Activated CD8-positive, alpha-beta T cell treated with anti-CD3 and anti-CD28 coated beads, Interleukin-2, amount 10 ng/mL, durations not matched to agents 7 days and 5 days (primary cell): ENCODE measurements at regions of chr19 and their contacts with region 1.

Region 1: DNA sequence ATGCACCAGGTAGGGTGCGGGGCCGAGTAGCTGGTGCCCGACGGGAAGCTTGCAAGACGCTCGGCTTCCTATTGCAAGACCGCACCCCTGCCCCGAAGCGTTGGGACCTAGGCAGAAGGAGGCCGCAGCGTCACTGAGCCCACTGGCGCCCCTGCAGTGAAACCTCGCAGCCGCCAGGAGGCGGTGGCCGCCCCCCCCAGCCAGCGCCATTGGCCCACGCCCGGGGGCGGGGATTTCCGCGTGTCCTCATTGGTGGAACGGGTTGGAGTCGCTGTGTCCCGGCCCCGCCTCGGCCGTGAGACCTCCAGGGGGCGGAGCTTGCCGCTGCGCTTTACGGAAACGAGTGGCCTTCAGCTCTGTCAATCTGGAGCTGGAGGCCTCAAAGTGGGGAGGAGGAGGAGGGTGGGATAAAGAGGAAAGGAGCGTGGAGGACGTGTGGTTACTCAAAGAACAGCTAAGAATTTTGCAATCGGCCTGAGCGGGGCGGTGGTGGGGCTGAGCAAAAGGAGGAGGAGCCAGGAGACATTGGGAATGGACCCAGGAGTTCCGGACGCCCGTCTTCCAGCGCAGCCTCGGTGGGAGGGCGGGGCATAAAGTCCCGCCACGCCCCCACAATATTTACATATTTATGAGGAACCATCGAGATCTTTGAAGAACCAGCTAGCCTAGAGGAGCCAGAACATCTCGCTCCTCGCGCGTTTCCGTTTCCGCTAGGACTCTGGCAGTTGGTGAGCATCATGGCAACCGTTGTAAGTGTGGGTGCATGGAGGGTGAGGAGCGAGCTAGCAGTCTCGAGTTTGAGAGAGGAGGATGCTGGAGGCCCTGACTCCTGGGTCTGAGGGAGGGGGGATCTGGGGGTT is at the starts of genes GYS1 and RUVBL2:
- DNase-seq: peak; percentile 99
- ATAC-seq: peak; percentile 95
- H3K4me3 Mint-ChIP-seq: peak within 1 kb of the TSS; percentile 92
- H3K27ac Mint-ChIP-seq: peak within 1 kb of the TSS; percentile 96
- H3K4me1 Mint-ChIP-seq: peaks cover 51% of the 10 kb centered on the region
- H3K27me3 Mint-ChIP-seq: no peaks in the 10 kb centered on the region
- total RNA-seq, gene GYS1: 54.7 to 57.9 TPM
- total RNA-seq, gene RUVBL2: 105 to 106 TPM

Region 2: GRCh38 chr19:48819366-48819816 is 174.0 kb before region 1 on chr19:
- CTCF ChIA-PET with region 1: no interaction called
- POLR2A ChIA-PET with region 1: no interaction called
- DNase-seq: no peak
- ATAC-seq: no peak
- H3K4me3 Mint-ChIP-seq: no peak overlapping the region
- H3K27ac Mint-ChIP-seq: no peak overlapping the region
- H3K4me1 Mint-ChIP-seq: peaks cover 2% of the 10 kb centered on the region
- H3K27me3 Mint-ChIP-seq: no peaks in the 10 kb centered on the region

Region 3: DNA sequence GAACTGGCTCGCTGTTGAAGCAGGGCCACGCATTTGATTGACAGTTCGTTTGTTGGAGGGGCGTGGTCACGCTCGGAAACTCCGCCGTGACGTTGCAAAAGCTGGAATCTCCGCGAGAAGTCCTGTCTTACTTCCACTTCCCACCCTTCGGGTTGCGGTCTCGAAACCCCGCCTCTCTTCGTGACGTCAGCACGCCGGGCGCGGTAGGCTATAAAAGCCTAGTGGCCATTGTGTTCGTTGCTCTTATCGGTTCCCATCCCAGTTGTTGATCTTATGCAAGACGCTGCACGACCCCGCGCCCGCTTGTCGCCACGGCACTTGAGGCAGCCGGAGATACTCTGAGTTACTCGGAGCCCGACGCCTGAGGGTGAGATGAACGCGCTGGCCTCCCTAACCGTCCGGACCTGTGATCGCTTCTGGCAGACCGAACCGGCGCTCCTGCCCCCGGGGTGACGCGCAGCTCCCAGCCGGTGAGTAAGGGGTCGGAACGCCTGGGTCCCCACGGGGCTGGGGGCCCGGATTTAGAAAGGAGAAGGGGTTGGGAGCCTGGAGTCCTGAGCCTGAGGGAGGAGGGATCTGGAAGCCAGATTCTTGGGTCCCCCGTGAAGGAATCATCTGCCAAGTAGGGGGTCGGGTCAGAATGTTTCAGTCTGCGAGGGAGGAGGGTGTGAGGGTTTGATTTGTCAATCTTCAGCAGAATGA is 121.1 kb before region 1 on chr19 and contains the start of gene PPP1R15A:
- CTCF ChIA-PET with region 1: interaction called, 5 read pairs
- POLR2A ChIA-PET with region 1: interaction called, 15 read pairs
- DNase-seq: peak; percentile 99
- ATAC-seq: peak; percentile 47
- H3K4me3 Mint-ChIP-seq: peak within 1 kb of the TSS; percentile 99
- H3K27ac Mint-ChIP-seq: peak within 1 kb of the TSS; percentile 98
- H3K4me1 Mint-ChIP-seq: peaks cover 42% of the 10 kb centered on the region
- H3K27me3 Mint-ChIP-seq: no peaks in the 10 kb centered on the region
- total RNA-seq, gene PPP1R15A: 104 to 124 TPM

Region 4: DNA sequence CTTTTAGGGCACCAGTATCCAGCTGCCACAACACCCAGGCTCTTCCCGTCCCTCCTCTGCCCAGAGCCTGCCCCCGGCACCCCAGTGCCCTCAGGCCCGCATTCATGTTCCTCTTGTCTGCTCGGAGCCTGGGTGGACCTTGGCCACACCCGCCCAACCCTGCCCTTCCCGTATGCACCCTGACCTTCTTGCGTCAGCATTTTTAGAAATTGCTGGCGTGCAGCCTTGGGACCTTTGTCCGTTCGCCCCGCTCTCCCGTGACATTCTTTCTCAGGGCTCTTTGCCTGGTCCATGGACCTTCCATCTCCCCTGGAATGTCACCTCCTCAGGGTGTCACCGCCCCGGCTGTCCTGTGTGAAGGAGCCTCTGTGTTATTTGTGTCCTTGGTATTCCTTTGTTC is 85.7 kb before region 1 on chr19:
- CTCF ChIA-PET with region 1: no interaction called
- POLR2A ChIA-PET with region 1: no interaction called
- DNase-seq: no peak
- ATAC-seq: no peak
- H3K4me3 Mint-ChIP-seq: no peak overlapping the region
- H3K27ac Mint-ChIP-seq: peak overlapping the region; percentile 49
- H3K4me1 Mint-ChIP-seq: peaks cover 7% of the 10 kb centered on the region
- H3K27me3 Mint-ChIP-seq: no peaks in the 10 kb centered on the region

Region 5: DNA sequence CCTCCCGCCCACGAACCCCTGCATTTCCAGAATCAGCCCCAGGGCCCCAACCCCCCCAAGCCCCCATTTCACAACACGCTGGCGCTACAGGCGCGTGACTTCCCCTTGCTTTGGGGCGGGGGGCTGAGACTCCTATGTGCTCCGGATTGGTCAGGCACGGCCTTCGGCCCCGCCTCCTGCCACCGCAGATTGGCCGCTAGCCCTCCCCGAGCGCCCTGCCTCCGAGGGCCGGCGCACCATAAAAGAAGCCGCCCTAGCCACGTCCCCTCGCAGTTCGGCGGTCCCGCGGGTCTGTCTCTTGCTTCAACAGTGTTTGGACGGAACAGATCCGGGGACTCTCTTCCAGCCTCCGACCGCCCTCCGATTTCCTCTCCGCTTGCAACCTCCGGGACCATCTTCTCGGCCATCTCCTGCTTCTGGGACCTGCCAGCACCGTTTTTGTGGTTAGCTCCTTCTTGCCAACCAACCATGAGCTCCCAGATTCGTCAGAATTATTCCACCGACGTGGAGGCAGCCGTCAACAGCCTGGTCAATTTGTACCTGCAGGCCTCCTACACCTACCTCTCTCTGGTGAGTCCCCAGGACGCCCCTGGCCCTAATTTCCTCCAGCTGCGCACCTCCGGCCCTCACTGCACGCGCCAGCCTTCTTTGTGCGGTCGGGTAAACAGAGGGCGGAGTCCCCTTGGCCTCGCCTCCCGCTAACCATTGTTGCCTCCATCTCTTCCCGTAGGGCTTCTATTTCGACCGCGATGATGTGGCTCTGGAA is 28.2 kb before region 1 on chr19 and contains the start of gene FTL:
- CTCF ChIA-PET with region 1: interaction called, 32 read pairs
- POLR2A ChIA-PET with region 1: interaction called, 4 read pairs
- DNase-seq: peak; percentile 94
- ATAC-seq: peak; percentile 72
- H3K4me3 Mint-ChIP-seq: peak within 1 kb of the TSS; percentile 96
- H3K27ac Mint-ChIP-seq: peak within 1 kb of the TSS; percentile 96
- H3K4me1 Mint-ChIP-seq: peaks cover 73% of the 10 kb centered on the region
- H3K27me3 Mint-ChIP-seq: no peaks in the 10 kb centered on the region
- total RNA-seq, gene FTL: 971 to 1,027 TPM

Region 6: DNA sequence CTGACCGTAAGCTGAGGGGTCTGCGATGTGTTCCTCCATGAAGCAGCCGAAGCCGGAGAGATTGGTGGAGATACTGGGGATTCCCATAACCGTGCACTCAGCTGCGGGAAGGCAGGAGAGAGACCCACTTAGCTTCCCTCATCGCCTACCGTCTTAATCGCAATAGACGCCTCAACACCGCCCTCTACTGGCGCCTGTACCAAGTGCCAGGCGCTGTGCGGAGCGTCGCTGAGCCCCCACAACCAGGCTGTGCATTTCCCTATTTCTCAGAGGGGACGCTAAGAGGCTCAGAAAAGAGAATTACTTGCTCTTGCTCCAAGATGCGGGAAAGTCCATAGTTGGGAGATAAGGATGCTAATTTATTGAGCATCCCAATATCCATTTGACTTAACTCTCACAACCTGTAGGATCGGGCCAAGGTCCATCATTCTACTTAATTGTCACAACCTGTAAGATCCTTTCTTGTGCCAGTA is 22.4 kb before region 1 on chr19:
- CTCF ChIA-PET with region 1: interaction called, 96 read pairs
- POLR2A ChIA-PET with region 1: interaction called, 6 read pairs
- DNase-seq: peak; percentile 89
- ATAC-seq: peak; percentile 68
- H3K4me3 Mint-ChIP-seq: no peak overlapping the region
- H3K27ac Mint-ChIP-seq: no peak overlapping the region
- H3K4me1 Mint-ChIP-seq: peaks cover 31% of the 10 kb centered on the region
- H3K27me3 Mint-ChIP-seq: no peaks in the 10 kb centered on the region

Region 7: GRCh38 chr19:48975947-48976847 is 17.2 kb before region 1 on chr19:
- CTCF ChIA-PET with region 1: interaction called, 96 read pairs
- POLR2A ChIA-PET with region 1: interaction called, 16 read pairs
- DNase-seq: peak; percentile 64
- ATAC-seq: peak; percentile 54
- H3K4me3 Mint-ChIP-seq: no peak overlapping the region
- H3K27ac Mint-ChIP-seq: no peak overlapping the region
- H3K4me1 Mint-ChIP-seq: peaks cover 15% of the 10 kb centered on the region
- H3K27me3 Mint-ChIP-seq: no peaks in the 10 kb centered on the region

Region 8: GRCh38 chr19:48982280-48982679 is 11.1 kb before region 1 on chr19:
- CTCF ChIA-PET with region 1: interaction called, 96 read pairs
- POLR2A ChIA-PET with region 1: interaction called, 16 read pairs
- DNase-seq: no peak
- ATAC-seq: no peak
- H3K4me3 Mint-ChIP-seq: no peak overlapping the region
- H3K27ac Mint-ChIP-seq: no peak overlapping the region
- H3K4me1 Mint-ChIP-seq: peaks cover 8% of the 10 kb centered on the region
- H3K27me3 Mint-ChIP-seq: no peaks in the 10 kb centered on the region

Region 9: GRCh38 chr19:49017666-49018351 is 24.4 kb after region 1 on chr19:
- CTCF ChIA-PET with region 1: interaction called, 32 read pairs
- POLR2A ChIA-PET with region 1: interaction called, 3 read pairs
- DNase-seq: peak; percentile 73
- ATAC-seq: peak; percentile 81
- H3K4me3 Mint-ChIP-seq: peak overlapping the region; percentile 72
- H3K27ac Mint-ChIP-seq: no peak overlapping the region
- H3K4me1 Mint-ChIP-seq: peaks cover 39% of the 10 kb centered on the region
- H3K27me3 Mint-ChIP-seq: peaks cover 11% of the 10 kb centered on the region

Region 10: DNA sequence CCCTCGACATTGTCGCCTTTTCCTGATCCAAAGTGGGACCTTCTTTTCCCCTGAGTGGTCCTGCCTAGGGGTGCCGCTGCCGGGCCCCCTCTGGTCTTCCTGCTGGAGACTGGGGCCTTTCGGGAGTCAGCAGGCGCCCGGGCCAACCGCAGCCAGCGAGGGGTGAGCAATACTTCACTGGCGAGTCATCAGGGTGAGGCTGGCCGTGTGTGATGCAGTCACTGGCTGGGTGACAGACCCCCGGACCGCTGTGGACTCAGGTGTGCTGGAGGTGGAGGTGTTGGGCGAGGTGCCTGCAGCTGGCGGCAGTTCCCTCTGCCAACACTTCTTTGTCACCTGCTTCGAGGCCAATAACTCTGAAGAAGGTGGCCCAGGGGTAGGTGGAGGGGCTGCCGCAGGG is 48.8 kb after region 1 on chr19:
- CTCF ChIA-PET with region 1: no interaction called
- POLR2A ChIA-PET with region 1: no interaction called
- DNase-seq: no peak
- ATAC-seq: no peak
- H3K4me3 Mint-ChIP-seq: no peak overlapping the region
- H3K27ac Mint-ChIP-seq: no peak overlapping the region
- H3K4me1 Mint-ChIP-seq: no peaks in the 10 kb centered on the region
- H3K27me3 Mint-ChIP-seq: no peaks in the 10 kb centered on the region